ENCODE measurements at regions of chr15 and their contacts with region 1.

Region 1: DNA sequence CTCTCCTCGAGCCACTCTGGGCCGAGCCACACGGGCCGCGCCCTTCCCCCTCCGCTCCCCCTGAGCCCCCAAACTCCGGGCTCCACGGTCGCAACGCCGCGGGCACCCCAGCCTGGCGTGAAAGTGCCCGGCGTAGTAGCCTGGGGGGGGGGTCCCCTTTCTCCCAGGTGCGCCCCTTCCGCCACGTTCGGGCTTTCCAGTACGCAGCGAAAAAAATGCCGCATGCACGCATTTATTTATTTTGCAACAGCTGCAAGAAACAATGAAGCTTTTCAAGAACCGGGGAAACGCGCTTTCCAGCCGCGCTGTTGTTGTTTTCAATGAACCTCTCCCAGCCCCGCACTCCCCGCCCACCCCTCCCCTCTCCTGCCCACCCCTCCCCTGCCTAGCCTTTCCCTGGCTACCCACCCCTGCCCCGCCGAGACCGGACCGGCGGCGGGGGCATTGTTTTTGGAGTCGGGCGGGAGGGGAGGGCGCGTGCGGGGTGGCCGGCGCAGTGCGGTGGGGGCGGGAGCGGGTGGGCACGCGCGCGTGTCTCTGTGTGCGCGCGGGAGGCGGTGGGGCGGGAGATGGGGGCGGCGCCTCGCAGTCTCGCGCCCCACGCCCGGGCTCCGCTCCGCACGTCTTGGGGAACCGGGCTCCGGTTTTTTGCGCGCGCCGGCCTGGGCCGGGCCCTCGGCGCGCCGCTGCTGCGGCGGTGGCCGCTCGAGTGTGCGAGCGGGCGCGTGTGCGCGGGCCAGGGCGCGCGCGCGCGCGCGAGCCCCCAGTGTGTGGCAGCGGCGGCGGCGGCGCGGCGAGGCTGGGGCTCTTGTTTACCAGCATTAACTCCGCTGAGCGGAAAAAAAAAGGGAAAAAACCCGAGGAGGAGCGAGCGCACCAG is at the start of gene IGF1R:
- DNase-seq: no peak
- H3K4me3 ChIP-seq: peak within 1 kb of the TSS; percentile 87
- CTCF ChIP-seq: no peak

Region 2: DNA sequence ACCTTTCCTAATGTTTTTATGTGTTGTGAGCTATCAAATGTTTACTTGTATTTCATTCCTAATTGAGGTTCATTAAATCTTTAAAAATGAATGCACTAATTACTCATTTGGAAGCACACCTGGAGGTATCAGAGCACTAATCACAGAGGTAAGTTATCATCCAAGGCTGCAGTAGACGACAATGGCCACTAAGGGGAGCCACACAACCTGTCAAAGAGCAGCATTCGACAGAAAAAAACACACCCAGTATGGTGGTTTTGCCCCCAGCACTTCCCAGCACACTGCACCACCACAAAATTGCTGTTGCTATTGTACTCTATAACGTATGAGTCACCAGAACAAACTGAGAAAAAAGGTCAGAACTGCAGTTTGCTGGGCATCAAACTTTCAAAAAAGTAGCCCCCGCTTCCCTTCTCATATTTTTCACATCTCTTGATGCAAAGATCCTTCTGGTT is 205.6 kb before region 1 on chr15:
- CTCF ChIA-PET with region 1: interaction called, 12 read pairs
- POLR2A ChIA-PET with region 1: no interaction called
- DNase-seq: peak; percentile 34
- H3K4me3 ChIP-seq: no peak overlapping the region
- CTCF ChIP-seq: peak; percentile 84

Region 3: GRCh38 chr15:98525661-98526001 is 122.4 kb before region 1 on chr15:
- CTCF ChIA-PET with region 1: interaction called, 30 read pairs
- POLR2A ChIA-PET with region 1: interaction called, 6 read pairs
- DNase-seq: no peak
- H3K4me3 ChIP-seq: no peak overlapping the region; the same call in 1 of the 2 replicates
- CTCF ChIP-seq: no peak

Region 4: GRCh38 chr15:98628216-98628615 is 19.8 kb before region 1 on chr15:
- CTCF ChIA-PET with region 1: interaction called, 20 read pairs
- POLR2A ChIA-PET with region 1: no interaction called
- DNase-seq: no peak
- H3K4me3 ChIP-seq: no peak overlapping the region
- CTCF ChIP-seq: no peak

Region 5: DNA sequence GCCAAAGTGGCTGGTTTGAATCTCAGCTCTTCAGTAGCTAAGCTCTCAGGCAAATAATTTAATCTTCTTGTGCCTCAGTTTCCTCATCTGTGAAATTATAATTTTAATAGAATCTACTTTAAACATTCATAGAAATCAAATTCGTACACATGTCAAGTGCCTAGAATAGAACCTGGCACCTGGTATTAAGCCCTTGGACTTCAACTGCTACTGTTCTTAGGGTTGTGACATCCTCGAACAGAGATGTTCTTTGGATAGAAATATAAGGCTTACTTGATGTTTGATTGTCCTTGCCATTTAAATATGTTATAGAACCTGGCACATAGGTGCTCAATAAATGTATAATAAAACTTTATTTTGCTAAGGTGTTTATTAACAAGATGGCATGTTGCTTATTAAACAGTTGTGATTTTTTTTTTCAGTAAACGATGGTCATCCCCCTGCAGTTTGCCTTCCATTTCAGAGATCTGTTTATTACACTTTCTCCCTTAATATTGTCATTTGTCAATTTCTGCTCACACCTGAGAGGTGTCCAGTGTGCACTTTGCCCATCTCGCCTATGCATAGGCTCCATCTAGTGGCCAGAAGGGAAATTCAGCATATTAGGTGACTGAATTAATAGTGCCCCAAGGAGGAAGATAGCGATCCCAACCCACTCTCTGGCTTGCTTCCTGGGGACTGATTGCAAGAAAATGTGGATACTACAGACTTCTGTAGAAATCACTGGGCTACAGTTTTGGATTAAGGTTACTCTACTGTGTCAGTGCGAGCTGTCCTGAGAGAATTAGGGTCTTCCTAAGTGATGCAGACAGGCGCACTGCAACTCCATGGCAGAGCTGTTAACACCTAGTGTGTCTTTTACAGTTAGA is 11.1 kb after region 1 on chr15:
- CTCF ChIA-PET with region 1: interaction called, 44 read pairs
- POLR2A ChIA-PET with region 1: no interaction called
- DNase-seq: no peak
- H3K4me3 ChIP-seq: no peak overlapping the region
- CTCF ChIP-seq: peak; percentile 70

Region 6: DNA sequence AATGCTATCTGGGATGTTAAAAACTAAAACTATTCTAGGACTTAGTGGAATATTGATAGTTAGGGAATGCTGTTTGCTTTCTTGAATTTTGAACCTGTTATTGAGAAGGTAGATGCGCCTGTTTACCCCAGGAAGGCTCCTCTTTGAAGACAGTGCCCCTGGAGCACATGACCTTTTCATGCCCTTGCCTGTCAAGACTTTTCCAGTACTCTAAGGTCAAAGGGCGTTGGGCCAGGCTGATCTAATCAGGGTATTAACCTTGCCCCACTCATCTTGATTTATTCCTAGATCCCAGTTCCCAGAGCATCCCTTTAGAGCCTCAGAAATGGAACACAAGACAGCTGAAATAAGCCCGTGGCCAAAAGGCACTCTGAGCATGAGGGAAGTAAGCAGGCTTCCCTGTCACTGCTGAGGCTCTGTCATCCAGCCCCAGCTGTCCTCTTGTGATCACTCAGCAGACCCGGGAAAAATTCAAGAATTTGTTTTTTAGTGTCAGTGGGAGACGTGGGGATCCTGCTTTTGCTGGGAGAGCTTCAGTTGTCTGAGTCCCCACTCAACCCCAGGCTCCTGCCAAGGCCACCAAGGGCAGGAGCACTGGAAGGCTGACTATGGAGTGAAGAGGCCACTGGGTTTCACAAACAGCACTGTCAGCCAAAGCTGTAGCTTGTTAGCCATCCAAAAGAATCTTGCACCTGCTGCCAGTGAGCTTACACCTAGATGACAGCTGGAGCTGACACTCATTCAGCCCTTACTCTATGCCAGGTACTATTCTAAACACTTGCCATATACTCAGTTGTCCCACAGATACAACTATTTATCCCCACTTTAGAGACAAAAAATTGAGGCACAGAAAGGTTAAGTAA is 190.6 kb after region 1 on chr15:
- CTCF ChIA-PET with region 1: no interaction called
- POLR2A ChIA-PET with region 1: no interaction called
- DNase-seq: no peak
- H3K4me3 ChIP-seq: no peak overlapping the region
- CTCF ChIP-seq: no peak

Region 7: GRCh38 chr15:98850961-98851573 is 203.1 kb after region 1 on chr15:
- CTCF ChIA-PET with region 1: interaction called, 29 read pairs
- POLR2A ChIA-PET with region 1: interaction called, 7 read pairs
- DNase-seq: no peak
- H3K4me3 ChIP-seq: peak overlapping the region; percentile 64
- CTCF ChIP-seq: peak; percentile 83

Region 8: DNA sequence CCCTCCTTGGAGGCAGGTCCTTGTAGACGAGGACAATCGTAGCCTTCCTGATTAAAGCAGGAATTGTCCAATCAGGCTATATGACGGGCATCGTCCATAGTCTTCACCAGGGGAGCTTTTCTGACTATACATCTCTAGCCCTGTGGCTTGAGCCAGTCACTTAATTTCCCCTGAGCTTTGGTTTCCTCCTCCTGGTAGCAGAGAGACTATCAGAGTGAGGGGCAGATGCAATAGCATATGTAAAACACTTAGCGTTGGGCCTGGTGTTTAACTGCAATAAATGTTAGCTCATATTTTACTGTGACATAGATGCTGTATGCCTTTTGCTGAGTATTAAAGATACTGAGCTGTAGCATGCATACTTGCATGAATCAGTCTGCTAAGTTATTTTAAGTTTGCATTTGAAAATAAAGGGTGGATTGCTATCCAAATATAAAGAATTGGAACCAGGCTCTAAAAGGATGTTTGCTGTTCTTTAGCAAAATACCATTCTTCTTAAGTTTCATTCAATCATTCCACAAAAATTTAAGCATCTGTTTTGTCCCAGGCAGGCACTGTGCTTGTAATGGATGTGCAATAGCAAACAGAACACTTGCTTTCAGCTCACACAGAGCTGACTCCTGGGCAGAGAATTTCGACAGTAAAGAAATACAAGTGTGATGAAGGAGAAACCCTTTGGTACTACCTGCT is 208.3 kb after region 1 on chr15:
- CTCF ChIA-PET with region 1: interaction called, 29 read pairs
- POLR2A ChIA-PET with region 1: interaction called, 7 read pairs
- DNase-seq: peak; percentile 92
- H3K4me3 ChIP-seq: no peak overlapping the region
- CTCF ChIP-seq: no peak

Region 9: DNA sequence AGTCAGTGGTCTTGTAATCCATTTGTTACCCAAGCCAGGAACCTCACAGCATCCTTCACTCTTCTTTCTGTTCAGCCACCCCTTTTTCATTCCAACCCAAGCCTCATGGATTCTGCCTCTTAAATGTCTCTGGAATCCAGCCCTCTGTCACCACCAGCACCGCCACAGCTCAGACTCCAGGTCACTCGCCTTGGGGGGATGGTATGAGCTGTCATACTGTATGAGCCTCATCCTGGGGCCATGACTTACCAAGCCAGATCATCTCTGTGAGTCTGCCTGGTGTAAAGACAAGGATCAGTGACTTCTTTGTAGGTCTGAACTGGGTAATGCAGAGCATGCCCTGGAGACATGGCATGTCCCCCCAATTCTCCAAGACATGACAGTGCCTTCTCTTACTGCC is 280.0 kb after region 1 on chr15:
- CTCF ChIA-PET with region 1: no interaction called
- POLR2A ChIA-PET with region 1: no interaction called
- DNase-seq: no peak
- H3K4me3 ChIP-seq: no peak overlapping the region
- CTCF ChIP-seq: no peak

Measured in AG04449 (cell line).